ENCODE measurements at regions of chr7 and their contacts with region 1.

Region 1: DNA sequence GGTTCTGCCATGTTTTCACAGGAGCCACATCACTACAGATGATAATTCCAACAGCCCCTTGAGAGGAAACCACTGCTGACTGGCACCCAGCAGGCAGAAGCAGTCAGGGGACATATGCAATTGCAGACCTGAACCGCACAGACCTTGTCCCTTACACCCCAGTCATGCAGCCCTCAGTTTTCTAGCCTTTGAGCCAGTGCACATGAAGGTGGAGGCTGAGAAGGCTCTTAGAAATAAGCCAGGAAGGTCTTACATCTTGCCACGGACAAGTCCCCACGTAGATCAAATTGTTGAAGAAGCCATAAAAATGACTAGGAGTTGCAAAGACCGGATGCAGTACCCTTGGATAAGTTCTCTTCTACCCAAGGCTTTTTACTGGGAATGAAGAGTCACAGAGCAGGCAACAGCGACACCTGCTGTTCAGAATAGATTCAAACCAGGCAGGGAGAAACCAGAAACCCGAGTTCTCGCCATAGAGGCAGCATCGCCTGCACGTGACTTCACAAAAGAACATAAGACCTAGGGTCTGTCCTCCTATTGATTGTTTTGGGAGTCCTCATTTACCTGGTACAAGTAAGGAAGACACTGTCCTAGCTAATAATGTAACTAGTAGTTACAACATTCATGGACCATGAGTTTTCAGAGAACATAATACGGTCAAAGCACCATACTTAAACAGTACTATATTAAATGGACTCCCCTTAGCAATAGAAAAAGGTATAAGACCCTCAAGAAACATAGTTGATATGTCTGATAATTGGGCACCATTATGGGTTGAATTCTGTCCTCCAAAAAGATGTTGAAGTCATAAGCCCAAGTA is 11.1 kb downstream of the STEAP1B start:
- DNase-seq: no peak
- ATAC-seq: peak; percentile 70
- H3K4me3 Mint-ChIP-seq: no peak overlapping the region
- H3K27ac Mint-ChIP-seq: no peak overlapping the region
- H3K4me1 Mint-ChIP-seq: peaks cover 3% of the 10 kb centered on the region
- H3K27me3 Mint-ChIP-seq: no peaks in the 10 kb centered on the region
- CTCF ChIP-seq: peak; percentile 55

Region 2: GRCh38 chr7:22110227-22110839 is 378.5 kb before region 1 on chr7:
- CTCF ChIA-PET with region 1: interaction called, 43 read pairs
- POLR2A ChIA-PET with region 1: no interaction called
- intact Hi-C with region 1: loop called (anchors 1 kb)
- DNase-seq: no peak
- ATAC-seq: peak; percentile 84
- H3K4me3 Mint-ChIP-seq: no peak overlapping the region
- H3K27ac Mint-ChIP-seq: no peak overlapping the region
- H3K4me1 Mint-ChIP-seq: no peaks in the 10 kb centered on the region
- H3K27me3 Mint-ChIP-seq: no peaks in the 10 kb centered on the region
- CTCF ChIP-seq: peak; percentile 59

Region 3: GRCh38 chr7:22295402-22296264 is 193.2 kb before region 1 on chr7:
- CTCF ChIA-PET with region 1: no interaction called
- POLR2A ChIA-PET with region 1: no interaction called
- intact Hi-C with region 1: loop called (anchors 2 kb)
- DNase-seq: no peak
- ATAC-seq: no peak
- H3K4me3 Mint-ChIP-seq: no peak overlapping the region
- H3K27ac Mint-ChIP-seq: no peak overlapping the region
- H3K4me1 Mint-ChIP-seq: no peaks in the 10 kb centered on the region
- H3K27me3 Mint-ChIP-seq: no peaks in the 10 kb centered on the region
- CTCF ChIP-seq: no peak

Region 4: DNA sequence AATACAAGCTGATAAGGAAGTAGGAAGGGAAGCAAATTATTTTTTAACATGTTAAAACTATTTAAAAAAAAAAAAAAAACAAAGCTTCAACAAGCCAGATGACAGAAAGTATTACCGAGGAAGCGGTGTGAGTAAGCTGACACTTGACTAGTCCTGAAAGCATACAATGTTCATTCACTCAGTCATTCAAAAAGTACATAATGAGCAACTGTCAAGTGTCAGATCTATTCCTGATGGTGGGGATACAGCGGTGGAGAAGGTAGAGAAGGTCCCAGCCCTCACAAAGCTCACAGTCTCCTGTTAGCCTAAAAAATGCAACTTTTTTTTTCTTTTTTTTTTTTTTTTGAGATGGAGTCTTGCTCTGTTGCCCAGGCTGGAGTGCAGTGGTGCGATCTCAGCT is 171.9 kb before region 1 on chr7:
- CTCF ChIA-PET with region 1: no interaction called
- POLR2A ChIA-PET with region 1: no interaction called
- intact Hi-C with region 1: no loop called
- DNase-seq: no peak
- ATAC-seq: no peak
- H3K4me3 Mint-ChIP-seq: no peak overlapping the region
- H3K27ac Mint-ChIP-seq: no peak overlapping the region
- H3K4me1 Mint-ChIP-seq: no peaks in the 10 kb centered on the region
- H3K27me3 Mint-ChIP-seq: no peaks in the 10 kb centered on the region
- CTCF ChIP-seq: no peak

Region 5: DNA sequence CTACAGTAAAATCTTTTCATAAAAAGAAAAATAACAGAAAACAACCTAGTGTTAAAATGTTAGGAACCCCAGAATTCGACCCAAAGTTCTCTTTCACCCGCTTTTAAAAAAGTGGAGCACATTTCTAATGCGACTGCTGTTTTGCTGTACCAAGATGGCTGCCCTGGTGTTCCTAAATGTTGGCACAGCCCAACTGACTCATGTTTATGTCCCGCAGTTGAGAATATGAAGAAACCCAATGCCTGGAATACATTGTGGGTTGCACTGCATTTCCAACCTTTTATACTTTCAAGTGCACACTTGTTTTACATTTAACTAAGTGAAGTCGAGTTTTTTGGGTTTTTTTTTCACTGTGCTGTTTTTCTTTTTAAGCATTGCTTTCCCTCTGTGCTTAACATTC is 10.2 kb after region 1 on chr7:
- CTCF ChIA-PET with region 1: interaction called, 5 read pairs
- POLR2A ChIA-PET with region 1: no interaction called
- intact Hi-C with region 1: loop called (anchors 1 kb)
- DNase-seq: no peak
- ATAC-seq: no peak
- H3K4me3 Mint-ChIP-seq: no peak overlapping the region
- H3K27ac Mint-ChIP-seq: no peak overlapping the region
- H3K4me1 Mint-ChIP-seq: peaks cover 8% of the 10 kb centered on the region
- H3K27me3 Mint-ChIP-seq: peaks cover 7% of the 10 kb centered on the region
- CTCF ChIP-seq: no peak

Measured in activated B cell treated with CpG ODN at 0.5 μM for 24 hours (primary cell).